GM18951 (cell line): ENCODE measurements at regions of chr14 and their contacts with region 1.

Region 1: GRCh38 chr14:21241218-21241819 is 27.9 kb downstream of the HNRNPC start:
- POLR2A ChIP-seq: no peak

Region 2: DNA sequence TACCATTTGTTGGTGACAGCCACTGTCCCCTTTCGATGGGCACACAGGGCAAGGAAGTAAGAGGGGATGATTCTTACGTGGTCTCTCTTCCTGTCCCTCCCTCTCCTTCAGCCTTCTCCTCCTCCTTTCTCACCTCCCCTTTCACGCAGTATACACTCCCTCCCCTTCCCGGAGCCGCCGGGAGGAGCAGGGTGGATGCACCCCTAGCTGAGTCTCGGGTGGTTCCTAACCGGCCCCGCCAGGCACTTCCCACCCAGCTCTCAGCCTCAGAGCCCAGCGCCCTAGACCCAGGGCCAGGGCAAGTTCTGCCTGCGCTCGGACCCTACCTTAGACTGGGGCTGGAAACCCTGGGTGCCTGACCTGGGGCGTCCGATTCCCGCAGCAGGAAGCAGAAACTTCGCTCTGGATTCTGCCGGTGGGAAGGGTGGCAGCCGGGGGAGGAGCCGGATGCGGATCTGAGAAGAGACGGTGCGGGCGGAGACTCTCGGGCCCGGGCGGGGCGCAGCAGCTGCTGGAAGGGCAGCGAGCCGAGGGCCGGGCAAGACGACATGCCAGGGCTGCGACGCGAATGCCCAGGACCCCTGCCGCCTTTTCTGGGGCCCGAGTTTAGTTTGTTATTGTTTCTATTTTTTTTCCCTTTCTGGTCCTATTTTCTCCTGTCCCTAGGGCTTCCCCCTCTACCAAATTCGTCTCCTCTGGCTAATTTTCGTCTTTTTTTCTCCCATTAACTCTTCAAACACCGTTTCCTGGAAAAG is 828.1 kb before region 1 on chr14 and contains the start of gene TEP1:
- in situ Hi-C with region 1: no loop called
- POLR2A ChIP-seq: peak; percentile 68

Region 3: DNA sequence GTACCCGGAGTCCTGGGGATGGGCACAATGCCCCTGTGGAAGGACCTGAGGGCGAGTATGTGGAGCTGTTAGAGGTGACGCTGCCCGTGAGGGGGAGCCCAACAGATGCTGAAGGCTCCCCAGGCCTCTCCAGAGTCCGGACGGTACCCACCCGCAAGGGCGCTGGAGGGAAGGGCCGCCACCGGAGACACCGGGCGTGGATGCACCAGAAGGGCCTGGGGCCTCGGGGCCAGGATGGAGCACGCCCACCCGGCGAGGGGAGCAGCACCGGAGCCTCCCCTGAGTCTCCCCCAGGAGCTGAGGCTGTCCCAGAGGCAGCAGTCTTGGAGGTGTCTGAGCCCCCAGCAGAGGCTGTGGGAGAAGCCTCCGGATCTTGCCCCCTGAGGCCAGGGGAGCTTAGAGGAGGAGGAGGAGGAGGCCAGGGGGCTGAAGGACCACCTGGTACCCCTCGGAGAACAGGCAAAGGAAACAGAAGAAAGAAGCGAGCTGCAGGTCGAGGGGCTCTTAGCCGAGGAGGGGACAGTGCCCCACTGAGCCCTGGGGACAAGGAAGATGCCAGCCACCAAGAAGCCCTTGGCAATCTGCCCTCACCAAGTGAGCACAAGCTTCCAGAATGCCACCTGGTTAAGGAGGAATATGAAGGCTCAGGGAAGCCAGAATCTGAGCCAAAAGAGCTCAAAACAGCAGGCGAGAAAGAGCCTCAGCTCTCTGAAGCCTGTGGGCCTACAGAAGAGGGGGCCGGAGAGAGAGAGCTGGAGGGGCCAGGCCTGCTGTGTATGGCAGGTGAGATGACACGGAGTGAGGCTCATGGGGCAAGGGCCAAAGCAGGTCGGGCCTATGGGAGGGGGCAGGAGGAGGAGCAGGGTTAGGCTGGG is 166.7 kb before region 1 on chr14:
- in situ Hi-C with region 1: no loop called
- POLR2A ChIP-seq: no peak

Region 4: DNA sequence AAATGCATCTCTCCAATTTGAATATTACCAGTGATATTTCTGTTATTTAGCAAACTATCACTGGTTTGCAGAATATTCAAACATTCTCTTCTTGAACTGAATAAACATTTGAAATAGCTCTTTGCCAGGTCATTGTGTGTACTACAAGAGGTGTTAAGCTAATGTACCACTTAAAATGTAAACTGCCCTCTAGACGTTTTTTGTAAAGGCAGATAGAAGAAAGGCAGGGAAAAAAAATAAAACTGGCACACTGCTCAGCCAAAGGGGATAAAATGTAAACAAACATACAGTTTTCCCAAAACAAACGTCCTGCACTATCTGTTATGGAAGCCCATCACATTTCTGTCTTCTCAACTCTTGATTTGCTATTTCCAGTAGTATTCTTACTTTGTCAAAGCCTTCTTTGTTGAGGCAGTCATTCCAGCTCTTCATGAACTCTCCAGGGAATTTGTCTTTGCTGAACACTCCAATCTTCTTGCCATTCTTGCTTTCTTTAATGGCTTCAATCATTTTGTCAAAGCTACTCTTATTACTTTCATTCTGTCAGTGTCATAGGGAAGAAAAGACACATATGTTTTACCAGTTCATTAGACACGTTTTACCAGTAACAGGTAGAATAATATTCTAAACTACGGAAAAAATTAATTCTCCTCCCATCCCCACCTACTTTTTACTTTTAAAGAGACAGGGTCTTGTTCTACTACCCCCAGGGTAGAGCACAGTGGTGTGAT is 128.8 kb after region 1 on chr14:
- in situ Hi-C with region 1: loop called (anchors 10 kb)
- POLR2A ChIP-seq: no peak